K562 (cell line): ENCODE measurements at regions of chr1 and their contacts with region 1.

Region 1: DNA sequence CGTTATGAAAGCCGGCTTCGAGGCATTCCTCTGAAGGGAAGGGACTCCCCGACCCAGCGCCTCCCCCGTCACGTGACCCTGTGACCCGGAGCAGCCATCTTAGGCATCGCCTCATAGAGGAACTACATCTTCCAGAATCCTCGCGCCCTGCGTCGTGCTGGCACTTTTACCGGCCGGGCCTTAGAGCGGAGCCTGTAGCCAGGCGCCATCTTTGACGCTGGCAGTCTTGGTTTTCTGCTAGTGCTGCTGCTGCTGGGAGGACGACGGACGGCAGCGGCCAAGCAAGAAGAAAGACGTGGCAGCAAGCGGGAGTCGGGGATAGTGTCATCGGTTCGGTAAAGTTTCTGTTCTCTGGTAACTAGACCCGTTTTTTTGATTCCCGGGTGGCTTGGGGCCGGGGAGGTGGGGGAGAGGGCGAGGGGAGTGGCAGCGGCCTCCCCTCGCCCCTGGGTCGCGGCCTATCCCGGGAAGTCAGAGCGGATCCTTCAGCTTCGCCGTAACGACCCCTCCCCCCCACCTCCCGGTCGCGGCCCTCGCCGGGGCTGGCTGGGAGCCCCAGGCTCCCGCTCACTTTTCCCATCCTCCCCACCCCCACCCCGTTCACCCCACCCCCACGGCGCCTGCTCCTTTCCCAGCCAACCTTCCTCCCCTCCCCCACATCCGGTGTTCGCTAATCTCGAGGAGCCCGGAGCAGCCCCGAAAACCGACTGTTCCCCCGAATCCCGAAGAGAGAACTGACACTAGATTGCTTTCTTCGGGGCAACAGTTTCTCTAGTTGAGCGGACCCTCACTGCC is at the starts of genes ZBED6 and ZC3H11A:
- DNase-seq: peak; percentile 95 to 100 (median 96)
- ATAC-seq: peak; percentile 96
- H3K4me3 ChIP-seq: peak within 1 kb of the TSS; percentile 77
- H3K27ac ChIP-seq: peak within 1 kb of the TSS; percentile 99
- H3K4me1 ChIP-seq: peaks cover 2 to 43% of the 10 kb centered on the region in 2 experiments
- H3K27me3 ChIP-seq: no peaks in the 10 kb centered on the region
- CTCF ChIP-seq: no peak
- EP300 ChIP-seq: peak; percentile 62; the same call in 1 of the 2 replicates
- POLR2A ChIP-seq: peak; percentile 92
- RAD21 ChIP-seq: no peak
- polyA plus RNA-seq, gene ZBED6: 0.21 to 0.96 TPM
- polyA plus RNA-seq, gene ZC3H11A: 34.2 to 53.8 TPM

Region 2: DNA sequence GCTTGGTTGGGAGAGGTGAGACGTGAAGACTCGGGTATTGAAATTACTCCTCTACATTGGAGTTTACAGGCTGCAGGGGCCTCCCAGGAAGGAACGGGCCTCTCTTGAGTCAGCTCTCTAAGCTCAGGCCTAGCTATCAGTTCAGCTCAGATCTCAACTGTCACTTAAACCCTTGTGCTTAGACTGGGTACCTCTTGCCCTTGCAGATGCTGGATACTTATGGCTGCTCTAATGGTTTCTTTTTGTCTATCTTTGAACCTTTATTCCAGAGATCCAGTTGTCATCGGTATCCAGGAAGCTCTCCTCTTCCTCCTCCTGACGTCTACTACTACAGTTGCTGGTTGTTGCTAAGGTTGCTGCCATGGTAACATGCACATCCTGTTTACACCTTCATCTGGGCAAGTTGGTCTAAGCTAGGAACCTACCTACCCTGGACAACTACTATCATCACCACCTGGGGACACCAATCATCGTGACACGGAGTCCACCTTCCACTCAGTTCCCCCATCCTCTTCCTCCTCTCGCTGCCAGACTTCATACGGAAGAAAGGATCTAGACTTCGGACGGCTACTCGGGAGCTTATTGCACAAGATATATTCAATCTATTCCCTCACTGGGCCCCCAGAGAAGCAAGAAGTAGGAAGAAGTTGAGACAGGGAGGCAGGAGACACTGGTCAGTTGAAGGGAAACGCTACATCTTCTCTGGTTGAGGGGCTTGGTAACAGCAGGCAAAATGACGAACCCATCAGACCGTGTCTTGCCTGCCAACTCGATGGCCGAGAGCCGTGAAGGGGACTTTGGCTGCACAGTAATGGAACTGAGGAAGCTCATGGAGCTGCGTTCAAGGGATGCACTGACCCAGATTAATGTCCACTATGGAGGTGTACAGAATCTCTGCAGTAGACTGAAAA is 112.9 kb before region 1 on chr1:
- CTCF ChIA-PET with region 1: no interaction called
- POLR2A ChIA-PET with region 1: no interaction called
- in situ Hi-C with region 1: no loop called
- intact Hi-C with region 1: no loop called
- DNase-seq: peak; percentile 53 to 77 (median 58)
- ATAC-seq: peak; percentile 78
- H3K4me3 ChIP-seq: peak overlapping the region; percentile 36
- H3K27ac ChIP-seq: peak overlapping the region; percentile 69
- H3K4me1 ChIP-seq: peaks cover 26 to 38% of the 10 kb centered on the region in 2 experiments
- H3K27me3 ChIP-seq: no peaks in the 10 kb centered on the region
- CTCF ChIP-seq: no peak
- EP300 ChIP-seq: peak; percentile 76; the same call in 1 of the 2 replicates
- POLR2A ChIP-seq: peak; percentile 49; the same call in 1 of the 2 replicates
- RAD21 ChIP-seq: peak in 1 of 2 experiments; percentile 7; a peak in 1 of 4 replicates

Region 3: GRCh38 chr1:203726417-203726867 is 69.2 kb before region 1 on chr1:
- CTCF ChIA-PET with region 1: no interaction called
- POLR2A ChIA-PET with region 1: interaction called, 4 read pairs
- in situ Hi-C with region 1: no loop called
- intact Hi-C with region 1: loop called (anchors 2 kb)
- DNase-seq: peak; percentile 57 to 95 (median 74)
- ATAC-seq: peak; percentile 91
- H3K4me3 ChIP-seq: no peak overlapping the region
- H3K27ac ChIP-seq: peak overlapping the region; percentile 11; the same call in 2 of the 3 replicates
- H3K4me1 ChIP-seq: peaks cover 4 to 15% of the 10 kb centered on the region in 2 experiments; a peak in 4 of 5 replicates
- H3K27me3 ChIP-seq: no peaks in the 10 kb centered on the region
- CTCF ChIP-seq: no peak
- EP300 ChIP-seq: peak; percentile 90
- POLR2A ChIP-seq: no peak
- RAD21 ChIP-seq: peak; percentile 28 to 34; a peak in 2 of 4 replicates

Region 4: GRCh38 chr1:203807196-203807595 is 11.6 kb after region 1 on chr1:
- CTCF ChIA-PET with region 1: no interaction called
- POLR2A ChIA-PET with region 1: interaction called, 17 read pairs
- in situ Hi-C with region 1: no loop called
- intact Hi-C with region 1: no loop called
- DNase-seq: no peak
- ATAC-seq: no peak
- H3K4me3 ChIP-seq: no peak overlapping the region
- H3K27ac ChIP-seq: no peak overlapping the region
- H3K4me1 ChIP-seq: no peaks in the 10 kb centered on the region
- H3K27me3 ChIP-seq: no peaks in the 10 kb centered on the region
- CTCF ChIP-seq: no peak
- EP300 ChIP-seq: no peak
- POLR2A ChIP-seq: no peak
- RAD21 ChIP-seq: no peak

Region 5: DNA sequence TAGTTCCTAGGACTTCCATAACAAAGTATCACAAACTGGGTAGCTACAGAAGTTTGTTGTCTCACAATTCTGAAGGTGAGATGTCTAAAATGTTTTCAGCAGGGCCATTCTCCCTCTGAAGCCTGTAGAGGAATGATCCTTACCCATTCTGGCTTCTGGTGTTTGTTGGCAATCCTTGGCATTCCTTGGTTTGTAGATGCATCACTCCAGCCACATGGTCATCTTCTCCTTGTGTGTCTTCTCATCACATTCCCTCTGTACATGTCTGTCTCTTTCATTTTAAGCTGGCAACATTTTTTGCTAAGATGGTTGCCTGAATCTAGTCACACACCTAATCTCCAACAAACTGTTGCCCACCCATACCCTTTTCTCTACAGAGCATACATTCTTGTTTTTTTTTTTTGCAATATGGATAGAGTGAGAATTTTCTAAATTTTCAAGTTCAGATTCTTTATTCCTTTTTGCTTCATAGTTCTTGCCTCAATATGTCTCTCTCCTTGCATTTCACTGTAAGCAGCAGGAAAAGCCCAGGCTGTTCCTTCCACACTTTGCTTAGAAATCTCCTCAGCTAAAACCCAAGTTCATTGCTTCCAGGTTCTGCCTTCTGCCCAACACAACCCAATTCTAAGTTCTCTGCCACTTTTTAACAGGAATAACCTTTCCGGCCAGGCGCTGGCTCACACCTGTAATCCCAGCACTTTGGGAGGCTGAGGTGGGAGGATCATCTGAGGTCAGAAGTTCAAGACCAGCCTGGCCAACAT is 18.1 kb after region 1 on chr1:
- CTCF ChIA-PET with region 1: no interaction called
- POLR2A ChIA-PET with region 1: interaction called, 14 read pairs
- in situ Hi-C with region 1: no loop called
- intact Hi-C with region 1: no loop called
- DNase-seq: no peak
- ATAC-seq: no peak
- H3K4me3 ChIP-seq: no peak overlapping the region
- H3K27ac ChIP-seq: no peak overlapping the region
- H3K4me1 ChIP-seq: no peaks in the 10 kb centered on the region
- H3K27me3 ChIP-seq: no peaks in the 10 kb centered on the region
- CTCF ChIP-seq: no peak
- EP300 ChIP-seq: no peak
- POLR2A ChIP-seq: no peak; the same call in 1 of the 2 replicates
- RAD21 ChIP-seq: no peak